ENCODE measurements at regions of chr1 and their contacts with region 1.

Region 1: GRCh38 chr1:230772457-230773395 is 25.5 kb downstream of the CAPN9 start:
- DNase-seq: peak; percentile 57 to 96 (median 76)

Region 2: GRCh38 chr1:230340778-230341546 is 431.8 kb before region 1 on chr1:
- intact Hi-C with region 1: loop called (anchors 10 kb)
- DNase-seq: no peak

Region 3: GRCh38 chr1:230708631-230709580 is 63.8 kb before region 1 on chr1:
- intact Hi-C with region 1: loop called (anchors 10 kb)
- DNase-seq: peak in 1 of 10 donors; percentile 82

Measured in posterior cingulate gyrus (tissue), 11 donors.